GM12878 (cell line): ENCODE measurements at regions of chr2 and their contacts with region 1.

Region 1: GRCh38 chr2:109545828-109546713 is 67.7 kb downstream of the SEPTIN10 start:
- DNase-seq: peak; percentile 39
- ATAC-seq: peak; percentile 97
- H3K4me3 ChIP-seq: no peak overlapping the region
- H3K27ac ChIP-seq: no peak overlapping the region
- H3K4me1 ChIP-seq: no peaks in the 10 kb centered on the region; the same call in 1 of the 2 replicates
- H3K27me3 ChIP-seq: no peaks in the 10 kb centered on the region; a peak in 1 of 4 replicates
- CTCF ChIP-seq: peak; percentile 83 to 97 (median 95)
- EP300 ChIP-seq: no peak
- POLR2A ChIP-seq: no peak
- RAD21 ChIP-seq: peak; percentile 98

Region 2: DNA sequence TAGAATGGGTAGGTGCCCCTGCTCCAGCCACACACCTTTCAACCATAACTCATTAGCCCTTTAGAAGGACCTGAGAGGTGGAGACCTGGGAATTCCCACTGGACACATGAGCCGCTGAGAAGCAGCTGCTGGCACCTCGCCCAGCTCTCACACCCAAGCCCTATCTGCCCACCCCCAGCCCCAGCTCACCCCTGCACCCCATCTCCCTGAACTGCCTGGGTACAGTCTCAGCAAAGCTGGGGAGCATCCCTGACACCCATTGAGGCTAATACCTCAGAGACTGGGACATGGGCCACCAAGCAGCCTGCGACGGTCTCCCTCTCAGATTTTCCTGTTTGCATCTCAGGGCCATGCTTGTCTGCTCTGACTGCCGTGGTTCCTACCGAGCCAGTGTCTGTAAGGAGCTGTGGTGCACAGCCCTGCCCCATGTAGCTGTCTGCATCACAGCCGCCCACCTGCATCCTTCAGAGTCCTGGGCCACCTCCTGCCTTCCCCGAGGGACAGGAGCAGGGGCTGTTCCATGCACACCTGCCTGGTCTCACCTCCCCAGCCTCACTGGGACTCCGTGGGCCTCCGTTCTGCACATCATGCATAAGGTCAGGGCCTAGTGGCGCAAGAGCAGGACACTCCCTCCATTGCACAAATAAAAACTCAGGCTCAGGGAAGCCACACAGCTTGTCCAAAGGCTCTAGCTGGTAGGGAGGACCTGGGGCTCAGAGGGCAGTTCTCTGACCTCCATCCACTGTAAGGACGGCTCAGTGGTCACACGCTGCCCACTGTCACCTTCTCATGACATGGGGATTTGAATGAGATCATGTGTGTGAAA is 22.3 kb before region 1 on chr2:
- CTCF ChIA-PET with region 1: interaction called, 12 read pairs
- POLR2A ChIA-PET with region 1: interaction called, 3 read pairs
- RAD21 ChIA-PET with region 1: interaction called, 5 read pairs
- SMC1A ChIA-PET with region 1: interaction called, 4 read pairs
- in situ Hi-C with region 1: no loop called
- intact Hi-C with region 1: no loop called
- DNase-seq: no peak
- ATAC-seq: peak; percentile 26; the same call in 1 of the 3 replicates
- H3K4me3 ChIP-seq: no peak overlapping the region
- H3K27ac ChIP-seq: no peak overlapping the region
- H3K4me1 ChIP-seq: no peaks in the 10 kb centered on the region
- H3K27me3 ChIP-seq: no peaks in the 10 kb centered on the region
- CTCF ChIP-seq: no peak
- EP300 ChIP-seq: no peak
- POLR2A ChIP-seq: no peak
- RAD21 ChIP-seq: no peak

Region 3: DNA sequence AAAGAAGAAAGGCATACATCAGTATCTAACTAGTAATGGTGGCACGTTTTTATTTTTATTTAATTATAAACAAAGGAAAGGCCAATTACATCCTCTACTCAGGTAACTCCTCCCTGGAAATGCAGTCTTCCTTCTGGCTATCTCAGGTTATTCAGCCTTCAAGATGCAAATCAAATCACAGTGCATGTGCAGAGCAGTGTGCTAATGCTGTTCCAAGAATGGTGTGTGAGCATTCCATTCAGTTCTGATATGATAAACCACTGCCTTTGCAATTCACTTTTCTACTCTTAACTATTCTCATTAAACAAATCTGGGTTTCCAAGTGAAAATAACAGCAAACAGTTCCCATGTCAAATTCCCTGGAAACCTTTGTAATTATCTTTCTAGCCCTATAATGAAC is 29.3 kb after region 1 on chr2:
- CTCF ChIA-PET with region 1: interaction called, 12 read pairs
- POLR2A ChIA-PET with region 1: no interaction called
- RAD21 ChIA-PET with region 1: interaction called, 3 read pairs
- SMC1A ChIA-PET with region 1: interaction called, 8 read pairs
- in situ Hi-C with region 1: no loop called
- intact Hi-C with region 1: loop called (anchors 5 kb)
- DNase-seq: no peak
- ATAC-seq: no peak
- H3K4me3 ChIP-seq: no peak overlapping the region
- H3K27ac ChIP-seq: no peak overlapping the region
- H3K4me1 ChIP-seq: no peaks in the 10 kb centered on the region
- H3K27me3 ChIP-seq: no peaks in the 10 kb centered on the region
- CTCF ChIP-seq: no peak
- EP300 ChIP-seq: no peak
- POLR2A ChIP-seq: no peak
- RAD21 ChIP-seq: no peak

Region 4: GRCh38 chr2:109613922-109614714 is 68.0 kb after region 1 on chr2 and contains the starts of genes SEPTIN10 and SOWAHC:
- CTCF ChIA-PET with region 1: interaction called, 139 read pairs
- POLR2A ChIA-PET with region 1: no interaction called
- RAD21 ChIA-PET with region 1: interaction called, 110 read pairs
- SMC1A ChIA-PET with region 1: interaction called, 110 read pairs
- in situ Hi-C with region 1: no loop called
- intact Hi-C with region 1: loop called (anchors 1 kb)
- DNase-seq: peak; percentile 57
- ATAC-seq: peak; percentile 88
- H3K4me3 ChIP-seq: peak within 1 kb of the TSS; percentile 62
- H3K27ac ChIP-seq: peak within 1 kb of the TSS; percentile 70
- H3K4me1 ChIP-seq: no peaks in the 10 kb centered on the region
- H3K27me3 ChIP-seq: no peaks in the 10 kb centered on the region
- CTCF ChIP-seq: no peak
- EP300 ChIP-seq: no peak
- POLR2A ChIP-seq: peak; percentile 73
- RAD21 ChIP-seq: no peak
- polyA plus RNA-seq, gene SEPTIN10: 32.7 to 38.6 TPM
- polyA plus RNA-seq, gene SOWAHC: 1.0 to 1.1 TPM

Region 5: DNA sequence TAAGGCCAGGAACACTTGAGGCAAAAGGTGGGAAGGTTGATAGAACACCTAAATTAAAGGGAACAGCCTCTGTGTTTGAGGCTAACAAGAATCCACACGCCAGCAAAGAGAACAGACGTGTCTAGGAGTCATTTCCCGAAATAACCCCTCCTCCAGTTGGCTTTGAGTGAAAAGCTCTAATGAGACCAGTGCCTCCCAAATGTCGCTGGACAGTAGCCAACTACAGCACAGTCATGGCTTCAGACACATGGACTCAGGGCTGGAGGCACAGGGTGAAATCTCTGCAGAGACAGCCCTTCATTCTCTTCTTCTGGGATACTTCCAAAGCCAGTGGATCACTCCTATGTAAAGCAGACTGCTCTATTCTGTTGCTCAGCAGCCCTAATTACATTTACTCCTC is 117.7 kb after region 1 on chr2:
- CTCF ChIA-PET with region 1: interaction called, 118 read pairs
- POLR2A ChIA-PET with region 1: no interaction called
- RAD21 ChIA-PET with region 1: interaction called, 41 read pairs
- SMC1A ChIA-PET with region 1: interaction called, 76 read pairs
- in situ Hi-C with region 1: no loop called
- intact Hi-C with region 1: loop called (anchors 1 kb)
- DNase-seq: no peak
- ATAC-seq: no peak
- H3K4me3 ChIP-seq: no peak overlapping the region
- H3K27ac ChIP-seq: no peak overlapping the region
- H3K4me1 ChIP-seq: no peaks in the 10 kb centered on the region
- H3K27me3 ChIP-seq: no peaks in the 10 kb centered on the region
- CTCF ChIP-seq: no peak
- EP300 ChIP-seq: no peak
- POLR2A ChIP-seq: no peak
- RAD21 ChIP-seq: no peak

Region 6: DNA sequence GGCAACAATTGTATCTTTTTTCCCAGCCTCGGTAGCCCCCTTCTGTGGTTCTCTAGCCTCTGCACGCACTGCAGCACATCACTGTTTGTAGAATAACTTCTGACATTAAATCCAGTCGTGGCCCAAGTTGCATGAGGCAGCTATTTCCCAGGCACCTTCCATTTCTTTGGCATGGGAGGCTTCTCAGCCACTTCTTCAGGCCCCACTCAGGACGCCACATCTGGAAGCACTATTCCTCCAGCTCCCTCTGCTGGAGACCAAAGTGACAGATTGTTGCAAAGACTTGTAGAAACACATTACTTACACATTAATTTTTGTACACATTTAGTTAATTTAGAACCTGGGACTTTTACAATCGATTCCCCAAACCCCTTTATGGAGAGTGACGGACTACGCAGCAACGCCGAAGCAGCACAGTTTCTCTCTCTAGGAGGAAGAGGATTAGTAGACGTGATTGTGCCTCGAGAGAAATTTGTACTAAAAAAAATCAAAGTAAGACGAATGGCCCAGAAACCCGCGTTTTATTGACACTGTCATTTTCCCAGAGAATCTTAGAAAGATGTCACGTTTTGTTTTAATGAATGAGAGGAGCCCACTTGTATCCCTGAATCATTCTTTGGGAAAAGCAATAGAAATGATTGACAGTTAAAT is 190.2 kb after region 1 on chr2:
- CTCF ChIA-PET with region 1: interaction called, 163 read pairs
- POLR2A ChIA-PET with region 1: no interaction called
- RAD21 ChIA-PET with region 1: interaction called, 74 read pairs
- SMC1A ChIA-PET with region 1: interaction called, 88 read pairs
- in situ Hi-C with region 1: no loop called
- intact Hi-C with region 1: loop called (anchors 1 kb)
- DNase-seq: no peak
- ATAC-seq: peak; percentile 82
- H3K4me3 ChIP-seq: no peak overlapping the region
- H3K27ac ChIP-seq: no peak overlapping the region
- H3K4me1 ChIP-seq: no peaks in the 10 kb centered on the region
- H3K27me3 ChIP-seq: no peaks in the 10 kb centered on the region
- CTCF ChIP-seq: peak; percentile 58 to 67 (median 58); a peak in 5 of 6 replicates
- EP300 ChIP-seq: no peak
- POLR2A ChIP-seq: no peak
- RAD21 ChIP-seq: peak; percentile 77